Transverse colon (tissue), 4 donors: ENCODE measurements at regions of chr12 and their contacts with region 1.

Region 1: DNA sequence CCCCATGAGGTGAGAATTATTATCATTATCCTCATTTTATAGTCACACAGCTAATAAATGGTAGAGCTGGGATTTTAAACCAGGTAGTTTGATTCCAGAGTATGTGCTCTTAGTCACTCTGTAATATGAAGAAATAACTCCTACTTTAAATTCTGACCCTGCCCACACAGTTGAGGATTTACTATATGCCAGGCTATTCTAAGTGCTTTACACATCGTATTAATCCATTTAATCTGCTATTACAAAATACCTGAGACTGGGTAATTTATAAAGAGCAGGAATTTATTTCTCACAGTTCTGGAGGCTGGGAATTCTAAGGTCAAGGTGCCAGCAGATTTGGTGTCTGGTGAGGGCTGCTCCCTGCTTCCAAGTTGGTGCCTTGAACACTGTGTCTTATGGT is 19.6 kb upstream of the WIF1 start:
- DNase-seq: no peak
- H3K4me3 ChIP-seq: no peak overlapping the region
- H3K27ac ChIP-seq: no peak overlapping the region
- H3K4me1 ChIP-seq: no peaks in the 10 kb centered on the region
- H3K27me3 ChIP-seq: peaks cover 37% of the 10 kb centered on the region
- CTCF ChIP-seq: no peak
- EP300 ChIP-seq: no peak
- POLR2A ChIP-seq: no peak

Region 2: DNA sequence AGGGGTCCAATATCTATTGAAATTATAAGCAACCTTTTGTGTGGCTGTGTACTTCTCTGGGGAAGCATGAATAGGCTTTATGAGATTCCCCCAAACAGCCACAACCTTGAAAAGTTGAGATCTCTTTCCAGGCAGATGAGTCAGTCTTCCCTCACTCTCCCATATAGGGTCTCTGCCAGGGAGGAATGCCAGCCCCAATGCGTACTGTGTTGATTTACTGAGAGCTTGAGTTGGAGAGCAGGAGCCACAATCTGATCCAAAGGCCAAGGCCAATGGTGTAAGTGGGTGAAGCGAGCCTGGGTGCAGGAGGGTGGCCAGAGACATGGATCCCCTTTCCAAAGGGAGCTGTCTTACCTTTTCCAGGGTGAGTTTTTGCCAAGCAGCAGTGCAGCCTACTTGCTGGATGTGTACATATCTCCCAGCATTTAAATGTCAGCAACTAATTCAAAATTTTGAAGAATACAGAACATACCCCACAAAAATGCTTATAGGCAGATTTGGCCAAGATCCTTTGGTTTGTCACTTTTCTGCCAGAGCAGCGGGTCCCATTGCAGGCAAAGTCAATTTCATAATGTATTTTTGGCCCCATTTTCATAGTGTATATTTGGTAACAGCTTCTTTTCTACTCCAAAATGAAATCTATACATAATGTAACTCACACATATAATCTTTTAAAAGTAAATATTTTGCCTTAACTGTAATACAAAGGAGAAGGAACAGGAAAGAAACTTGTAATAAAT is 228.1 kb before region 1 on chr12:
- in situ Hi-C with region 1: no loop called
- intact Hi-C with region 1: no loop called
- DNase-seq: no peak
- H3K4me3 ChIP-seq: no peak overlapping the region
- H3K27ac ChIP-seq: no peak overlapping the region
- H3K4me1 ChIP-seq: peaks cover 0 to 8% (median 2%) of the 10 kb centered on the region in 4 donors
- H3K27me3 ChIP-seq: no peaks in the 10 kb centered on the region
- CTCF ChIP-seq: no peak
- EP300 ChIP-seq: no peak
- POLR2A ChIP-seq: no peak

Region 3: GRCh38 chr12:65090461-65090860 is 50.3 kb before region 1 on chr12:
- in situ Hi-C with region 1: no loop called
- intact Hi-C with region 1: loop called (anchors 2 kb)
- DNase-seq: no peak
- H3K4me3 ChIP-seq: no peak overlapping the region
- H3K27ac ChIP-seq: no peak overlapping the region
- H3K4me1 ChIP-seq: no peaks in the 10 kb centered on the region
- H3K27me3 ChIP-seq: peaks cover 38% of the 10 kb centered on the region
- CTCF ChIP-seq: no peak
- EP300 ChIP-seq: no peak
- POLR2A ChIP-seq: no peak

Region 4: GRCh38 chr12:66403746-66404145 is 1263.0 kb after region 1 on chr12:
- in situ Hi-C with region 1: no loop called
- intact Hi-C with region 1: no loop called
- DNase-seq: no peak
- H3K4me3 ChIP-seq: no peak overlapping the region
- H3K27ac ChIP-seq: no peak overlapping the region
- H3K4me1 ChIP-seq: peaks cover 0 to 7% (median 2%) of the 10 kb centered on the region in 4 donors
- H3K27me3 ChIP-seq: no peaks in the 10 kb centered on the region
- CTCF ChIP-seq: no peak
- EP300 ChIP-seq: no peak
- POLR2A ChIP-seq: no peak